Cardiac septum (tissue), 1 donor: ENCODE measurements at regions of chr10 and their contacts with region 1.

Region 1: GRCh38 chr10:63878428-63878827 is 357.2 kb downstream of the REEP3 start:
- DNase-seq: no peak

Region 2: DNA sequence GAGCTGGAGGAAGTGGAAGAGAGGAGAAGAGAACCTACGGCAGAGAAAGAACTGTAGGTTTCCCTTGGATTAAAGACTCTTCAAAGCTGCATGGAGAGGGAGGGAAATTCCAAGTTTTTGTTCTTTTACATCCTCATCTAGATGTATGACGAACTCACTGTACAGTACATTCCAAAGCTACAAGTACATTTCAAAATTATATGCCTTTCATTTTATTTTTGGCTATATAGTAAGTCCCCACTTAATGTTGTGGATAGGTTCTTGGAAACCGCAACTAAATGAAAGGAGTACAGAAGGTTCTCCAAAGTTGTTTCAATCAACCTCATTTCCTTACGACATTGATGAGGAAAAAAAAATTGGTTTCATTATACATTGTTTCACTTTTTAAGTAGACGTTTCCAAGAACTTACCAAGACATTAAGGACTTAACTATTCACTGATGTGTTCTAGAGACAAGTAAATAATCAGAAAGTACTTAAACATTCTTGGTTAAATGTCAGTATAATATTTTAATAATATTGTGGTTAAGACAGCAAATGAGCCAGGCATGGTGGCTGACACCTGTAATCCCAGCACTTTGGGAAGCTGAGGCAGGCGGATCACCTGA is 396.5 kb before region 1 on chr10:
- intact Hi-C with region 1: no loop called
- DNase-seq: no peak

Region 3: GRCh38 chr10:63727636-63728035 is 150.8 kb before region 1 on chr10:
- intact Hi-C with region 1: no loop called
- DNase-seq: no peak

Region 4: GRCh38 chr10:63976538-63976937 is 98.1 kb after region 1 on chr10:
- intact Hi-C with region 1: loop called (anchors 10 kb)
- DNase-seq: no peak

Region 5: DNA sequence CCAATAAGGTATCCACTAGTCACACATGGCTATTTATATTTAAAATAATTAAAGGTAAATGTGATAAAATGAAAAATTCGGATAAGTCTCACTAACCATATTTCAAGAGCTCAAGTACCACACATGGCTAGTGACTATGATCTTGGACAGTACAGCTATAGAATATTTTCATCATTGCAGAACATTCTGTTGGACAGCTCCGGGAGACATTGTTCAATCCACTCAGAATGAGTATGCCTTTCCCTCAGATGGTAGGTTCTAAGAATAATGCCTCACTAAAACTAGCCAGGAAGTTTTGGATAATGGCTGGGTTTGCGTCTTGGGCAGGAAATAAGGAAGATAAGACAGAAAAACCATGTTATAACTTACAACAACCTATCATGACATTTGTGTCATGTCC is 118.9 kb after region 1 on chr10:
- intact Hi-C with region 1: no loop called
- DNase-seq: no peak